Activated CD4-positive, alpha-beta memory T cell treated with anti-CD3 and anti-CD28 coated beads for 36 hours (primary cell): ENCODE measurements at regions of chr16 and their contacts with region 1.

Region 1: DNA sequence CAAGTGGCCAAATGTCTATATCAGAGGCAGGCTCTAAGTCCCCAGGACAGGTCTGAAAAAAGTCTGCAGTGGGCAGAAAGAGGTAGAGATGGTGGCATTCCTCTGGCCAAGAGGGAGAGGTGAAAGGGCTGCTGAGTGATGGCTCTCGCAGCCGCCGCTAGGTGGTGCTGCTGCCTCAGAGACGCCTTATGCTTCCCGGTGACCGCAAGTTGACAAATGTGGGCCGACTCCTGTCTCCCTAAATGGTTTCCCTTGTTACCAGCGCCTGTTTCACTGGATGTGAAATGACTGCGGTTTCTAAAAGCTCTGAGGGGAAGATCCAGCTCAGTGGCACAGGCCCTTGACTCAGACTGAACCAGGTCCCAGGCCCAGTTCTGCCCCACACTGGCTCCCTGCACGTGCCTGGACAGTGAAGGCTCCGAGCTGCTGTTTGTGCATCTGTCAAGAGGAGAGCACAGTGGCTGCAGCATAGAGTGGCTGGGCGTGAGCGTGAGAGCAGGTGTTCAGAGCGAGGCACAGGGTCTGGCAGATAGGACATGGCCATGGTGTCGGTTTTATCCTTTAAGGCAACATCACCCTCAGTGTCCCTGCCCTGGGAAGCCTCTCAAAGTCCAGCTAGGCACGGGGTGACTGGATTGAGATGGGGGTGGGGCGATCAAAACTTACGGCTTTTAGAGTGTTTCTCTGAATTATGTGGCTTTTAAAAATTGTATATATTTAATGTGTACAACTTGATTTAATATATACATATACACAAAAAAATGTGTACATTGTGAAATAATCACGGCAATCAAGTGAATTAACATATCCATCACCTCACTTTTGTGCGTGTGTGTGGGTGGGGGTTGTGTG is 19.9 kb downstream of the CLEC16A start:
- DNase-seq: peak; percentile 93
- H3K4me3 Mint-ChIP-seq: peak overlapping the region; percentile 60
- H3K27ac Mint-ChIP-seq: peak overlapping the region; percentile 98
- H3K4me1 Mint-ChIP-seq: peaks cover 77% of the 10 kb centered on the region
- H3K27me3 Mint-ChIP-seq: no peaks in the 10 kb centered on the region

Region 2: DNA sequence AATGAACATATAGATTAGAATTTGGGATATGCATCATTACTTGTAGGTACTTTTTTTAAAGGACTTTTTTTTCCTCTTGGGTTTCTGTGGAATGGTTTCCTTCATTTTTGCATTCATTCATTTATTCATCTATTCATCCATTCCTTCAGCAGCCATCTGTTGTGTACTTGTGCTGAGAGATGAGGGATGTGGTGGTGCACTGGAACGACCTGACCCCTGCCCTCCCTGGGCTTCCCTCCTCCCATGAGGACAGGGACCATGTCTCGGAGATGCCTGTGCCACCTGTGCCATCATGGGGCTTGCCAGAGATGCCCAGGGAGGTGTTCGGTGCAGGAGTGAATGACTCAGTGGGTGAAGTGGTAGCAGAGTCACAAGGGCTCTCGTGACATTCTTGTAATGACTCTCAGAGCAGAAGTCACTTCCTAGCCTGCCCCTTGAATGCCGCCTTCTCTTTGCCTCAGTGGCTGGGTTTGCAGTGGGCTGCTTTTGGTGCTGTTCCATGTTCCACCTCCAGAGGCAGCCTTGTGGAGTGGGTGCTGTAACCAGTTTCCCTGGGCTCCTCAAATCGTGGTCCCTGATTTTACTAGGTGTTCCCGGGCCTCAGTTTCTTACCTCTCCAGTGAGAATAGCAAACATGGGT is 24.0 kb after region 1 on chr16:
- CTCF ChIA-PET with region 1: interaction called, 45 read pairs
- POLR2A ChIA-PET with region 1: interaction called, 31 read pairs
- intact Hi-C with region 1: loop called (anchors 1 kb)
- DNase-seq: peak; percentile 93
- H3K4me3 Mint-ChIP-seq: peak overlapping the region; percentile 33
- H3K27ac Mint-ChIP-seq: peak overlapping the region; percentile 98
- H3K4me1 Mint-ChIP-seq: peaks cover 90% of the 10 kb centered on the region
- H3K27me3 Mint-ChIP-seq: no peaks in the 10 kb centered on the region

Region 3: GRCh38 chr16:11105038-11105903 is 141.0 kb after region 1 on chr16:
- CTCF ChIA-PET with region 1: interaction called, 8 read pairs
- POLR2A ChIA-PET with region 1: interaction called, 24 read pairs
- intact Hi-C with region 1: loop called (anchors 1 kb)
- DNase-seq: peak; percentile 69
- H3K4me3 Mint-ChIP-seq: peak overlapping the region; percentile 56
- H3K27ac Mint-ChIP-seq: peak overlapping the region; percentile 97
- H3K4me1 Mint-ChIP-seq: peaks cover 72% of the 10 kb centered on the region
- H3K27me3 Mint-ChIP-seq: no peaks in the 10 kb centered on the region

Region 4: DNA sequence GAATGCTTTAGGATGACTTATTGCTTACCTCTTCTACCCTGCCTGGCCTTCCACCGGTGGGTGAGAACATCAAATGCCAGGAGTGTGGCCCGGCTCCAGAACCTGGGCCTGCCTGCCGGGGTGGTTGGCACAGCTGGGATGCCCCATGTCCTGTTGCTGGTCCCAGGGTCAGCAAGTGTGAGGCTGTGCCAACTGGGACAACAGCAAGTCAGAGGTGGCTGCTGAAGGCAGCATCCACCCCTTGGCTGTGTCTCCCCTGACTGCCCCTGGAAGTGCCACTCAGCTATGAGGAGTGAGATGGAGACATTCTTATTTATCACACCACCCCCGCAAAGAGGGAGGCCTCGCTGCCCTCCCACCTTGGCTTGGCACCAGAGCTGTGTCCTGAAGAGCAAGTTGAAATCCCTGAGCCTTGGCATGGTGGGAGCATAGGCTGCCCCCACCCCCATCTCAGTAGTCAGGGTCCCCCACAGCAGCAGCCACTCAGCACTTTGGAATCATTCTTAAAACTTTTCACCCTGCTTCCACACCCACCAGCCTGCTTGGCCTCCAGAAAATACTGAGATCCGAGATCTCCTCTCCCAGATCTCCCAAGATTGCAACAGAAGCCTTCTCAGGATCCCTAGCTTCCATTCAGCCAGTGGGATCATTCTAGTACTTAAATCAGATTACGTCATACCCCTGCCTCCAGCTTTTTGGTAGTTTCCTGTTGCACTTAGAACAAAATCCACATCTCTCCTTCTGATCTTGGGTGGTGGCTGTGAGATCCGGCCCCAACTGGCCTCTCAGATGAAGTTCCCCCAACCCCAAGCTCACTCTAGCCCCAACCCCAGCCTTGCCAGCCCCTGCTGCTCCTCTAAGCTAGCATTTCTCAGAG is 164.2 kb after region 1 on chr16:
- CTCF ChIA-PET with region 1: no interaction called
- POLR2A ChIA-PET with region 1: no interaction called
- intact Hi-C with region 1: no loop called
- DNase-seq: no peak
- H3K4me3 Mint-ChIP-seq: no peak overlapping the region
- H3K27ac Mint-ChIP-seq: peak overlapping the region; percentile 71
- H3K4me1 Mint-ChIP-seq: peaks cover 45% of the 10 kb centered on the region
- H3K27me3 Mint-ChIP-seq: no peaks in the 10 kb centered on the region

Region 5: DNA sequence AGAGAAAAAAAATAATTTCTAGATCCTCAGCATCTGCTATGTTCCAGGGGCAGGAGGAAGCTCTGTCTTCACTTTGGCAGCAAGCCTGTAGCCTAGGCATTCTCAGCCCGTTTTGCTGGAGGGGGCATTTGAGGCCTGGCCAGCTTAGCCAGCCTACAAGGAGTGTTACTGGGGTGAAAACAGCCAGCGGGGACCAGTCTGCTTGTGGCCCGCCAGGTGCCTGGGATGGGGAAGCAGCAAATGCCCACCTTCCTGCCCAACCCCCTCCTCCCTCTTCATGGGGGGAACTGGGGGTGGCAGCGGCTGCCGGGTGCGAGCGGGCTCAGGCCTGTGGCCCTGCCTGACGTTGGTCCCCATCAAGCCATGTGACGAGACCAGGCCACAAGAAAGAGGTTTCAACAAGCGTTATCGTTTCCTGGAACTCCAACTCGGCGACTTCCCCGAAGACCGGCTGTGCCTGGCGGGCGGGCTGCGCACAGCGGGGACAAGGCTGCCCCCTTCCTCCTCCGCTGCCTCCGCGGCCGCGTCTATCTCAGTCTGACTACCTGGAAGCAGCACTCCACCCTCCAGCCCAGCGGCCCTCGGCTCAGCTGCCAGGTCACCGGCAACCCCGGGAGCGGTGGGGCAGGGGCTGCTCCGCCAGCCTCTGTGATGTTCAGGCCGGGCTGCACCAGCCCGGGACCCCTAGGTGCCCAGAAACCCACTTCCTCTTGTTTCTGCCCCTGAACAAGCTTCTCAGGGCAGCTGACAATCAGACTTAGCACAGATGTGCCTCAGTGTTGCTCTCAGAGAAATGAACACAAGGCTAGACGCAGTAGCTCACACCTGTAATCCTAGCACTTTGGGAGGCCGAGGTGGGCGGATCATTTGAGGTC is 268.8 kb after region 1 on chr16:
- CTCF ChIA-PET with region 1: interaction called, 16 read pairs
- POLR2A ChIA-PET with region 1: interaction called, 15 read pairs
- intact Hi-C with region 1: loop called (anchors 1 kb)
- DNase-seq: peak; percentile 97
- H3K4me3 Mint-ChIP-seq: peak overlapping the region; percentile 62
- H3K27ac Mint-ChIP-seq: peak overlapping the region; percentile 99
- H3K4me1 Mint-ChIP-seq: peaks cover 74% of the 10 kb centered on the region
- H3K27me3 Mint-ChIP-seq: no peaks in the 10 kb centered on the region

Region 6: GRCh38 chr16:11356573-11357331 is 392.5 kb after region 1 on chr16:
- CTCF ChIA-PET with region 1: interaction called, 45 read pairs
- POLR2A ChIA-PET with region 1: interaction called, 10 read pairs
- intact Hi-C with region 1: loop called (anchors 1 kb)
- DNase-seq: peak; percentile 73
- H3K4me3 Mint-ChIP-seq: peak overlapping the region; percentile 13
- H3K27ac Mint-ChIP-seq: peak overlapping the region; percentile 18
- H3K4me1 Mint-ChIP-seq: peaks cover 58% of the 10 kb centered on the region
- H3K27me3 Mint-ChIP-seq: peaks cover 28% of the 10 kb centered on the region

Region 7: GRCh38 chr16:11535471-11535870 is 571.2 kb after region 1 on chr16:
- CTCF ChIA-PET with region 1: interaction called, 6 read pairs
- POLR2A ChIA-PET with region 1: no interaction called
- intact Hi-C with region 1: loop called (anchors 10 kb)
- DNase-seq: no peak
- H3K4me3 Mint-ChIP-seq: no peak overlapping the region
- H3K27ac Mint-ChIP-seq: no peak overlapping the region
- H3K4me1 Mint-ChIP-seq: peaks cover 2% of the 10 kb centered on the region
- H3K27me3 Mint-ChIP-seq: no peaks in the 10 kb centered on the region

Region 8: GRCh38 chr16:12089492-12090150 is 1125.4 kb after region 1 on chr16:
- CTCF ChIA-PET with region 1: no interaction called
- POLR2A ChIA-PET with region 1: no interaction called
- intact Hi-C with region 1: loop called (anchors 10 kb)
- DNase-seq: peak; percentile 64
- H3K4me3 Mint-ChIP-seq: peak overlapping the region; percentile 56
- H3K27ac Mint-ChIP-seq: peak overlapping the region; percentile 57
- H3K4me1 Mint-ChIP-seq: peaks cover 23% of the 10 kb centered on the region
- H3K27me3 Mint-ChIP-seq: no peaks in the 10 kb centered on the region